ENCODE measurements at regions of chr15 and their contacts with region 1.

Region 1: DNA sequence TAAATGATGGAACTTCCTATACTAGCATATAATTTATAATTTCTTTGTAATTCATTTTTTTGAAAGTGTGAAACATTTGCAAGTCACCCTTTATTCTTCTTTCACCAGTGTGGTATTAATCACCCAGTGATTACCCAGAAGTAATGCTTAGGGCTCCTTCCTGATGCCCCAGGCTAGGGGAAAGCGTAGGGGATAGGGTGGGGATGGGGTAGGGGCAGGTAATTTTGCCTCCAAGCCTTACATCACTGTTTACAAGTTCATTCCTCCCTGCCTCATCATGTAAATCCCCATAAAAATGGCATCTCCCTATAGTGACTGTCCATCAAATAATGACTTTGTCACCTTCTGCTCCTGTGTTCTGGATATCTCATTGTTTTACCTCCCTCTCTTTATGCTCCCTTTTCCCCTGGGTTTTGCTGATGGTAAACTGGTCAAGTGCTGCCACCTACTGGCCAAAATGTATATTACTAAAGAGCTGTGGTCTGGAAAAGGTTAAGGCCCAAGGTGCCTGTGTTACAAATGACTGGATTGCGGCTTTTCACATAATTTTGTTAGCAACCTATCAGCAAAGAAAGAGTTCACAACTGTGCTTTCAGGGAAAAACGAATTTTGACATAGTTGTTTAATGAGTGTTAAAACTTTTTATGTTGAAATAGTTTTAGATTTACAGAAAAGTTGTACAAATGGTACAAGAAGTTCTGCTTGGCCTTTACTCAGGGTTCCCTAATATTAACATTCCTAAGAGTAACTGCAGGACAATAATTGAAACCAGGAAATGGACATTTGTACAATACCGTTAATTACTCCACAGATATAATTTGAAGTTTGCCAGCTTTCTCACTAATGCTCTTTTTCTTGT is 54.7 kb downstream of the ONECUT1 start:
- DNase-seq: peak; percentile 77
- H3K4me3 Mint-ChIP-seq: no peak overlapping the region
- H3K27ac Mint-ChIP-seq: no peak overlapping the region
- H3K4me1 Mint-ChIP-seq: peaks cover 35% of the 10 kb centered on the region
- H3K27me3 Mint-ChIP-seq: peaks cover 11% of the 10 kb centered on the region

Region 2: GRCh38 chr15:52261498-52262242 is 473.8 kb before region 1 on chr15:
- CTCF ChIA-PET with region 1: interaction called, 80 read pairs
- DNase-seq: peak; percentile 80
- H3K4me3 Mint-ChIP-seq: peak overlapping the region; percentile 36
- H3K27ac Mint-ChIP-seq: peak overlapping the region; percentile 94
- H3K4me1 Mint-ChIP-seq: peaks cover 68% of the 10 kb centered on the region
- H3K27me3 Mint-ChIP-seq: no peaks in the 10 kb centered on the region

Region 3: DNA sequence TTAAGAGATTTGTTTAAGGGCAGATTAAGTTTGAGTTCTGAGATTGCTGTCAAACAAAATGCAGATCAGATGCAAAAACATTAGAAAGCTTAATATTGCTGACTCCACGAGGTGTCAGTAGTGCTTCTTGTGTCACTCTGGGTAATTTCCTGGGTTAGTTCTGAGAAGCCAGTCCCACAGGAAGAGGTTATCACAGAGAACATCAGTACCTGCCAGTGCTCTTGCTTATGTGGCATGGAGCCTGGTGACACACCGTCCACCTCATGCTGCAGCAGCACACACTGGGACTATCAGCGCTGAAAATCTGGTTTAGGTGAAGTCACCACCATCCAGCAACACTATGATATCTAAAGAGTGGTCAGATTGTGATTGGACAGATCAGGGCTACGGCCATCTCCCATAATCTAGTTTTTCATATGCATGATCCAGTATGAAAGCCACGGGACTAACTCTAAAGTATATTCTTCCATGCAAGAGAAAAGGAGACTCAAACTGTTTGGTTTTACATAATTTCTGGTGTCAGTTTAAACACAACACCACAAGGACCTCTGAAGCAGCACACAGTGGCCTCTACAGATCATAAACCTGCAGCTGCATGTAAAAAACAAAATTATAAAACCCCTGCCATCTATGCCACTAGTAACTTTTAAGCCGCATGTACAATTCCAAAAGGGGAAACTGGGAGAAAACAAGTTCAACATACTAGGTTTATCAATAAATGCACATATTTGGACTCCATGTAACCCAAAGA is 403.8 kb before region 1 on chr15:
- CTCF ChIA-PET with region 1: interaction called, 40 read pairs
- DNase-seq: peak; percentile 70
- H3K4me3 Mint-ChIP-seq: peak overlapping the region; percentile 16
- H3K27ac Mint-ChIP-seq: peak overlapping the region; percentile 76
- H3K4me1 Mint-ChIP-seq: peaks cover 38% of the 10 kb centered on the region
- H3K27me3 Mint-ChIP-seq: no peaks in the 10 kb centered on the region

Region 4: GRCh38 chr15:52448011-52448890 is 287.2 kb before region 1 on chr15:
- CTCF ChIA-PET with region 1: no interaction called
- DNase-seq: no peak
- H3K4me3 Mint-ChIP-seq: no peak overlapping the region
- H3K27ac Mint-ChIP-seq: no peak overlapping the region
- H3K4me1 Mint-ChIP-seq: no peaks in the 10 kb centered on the region
- H3K27me3 Mint-ChIP-seq: no peaks in the 10 kb centered on the region

Region 5: DNA sequence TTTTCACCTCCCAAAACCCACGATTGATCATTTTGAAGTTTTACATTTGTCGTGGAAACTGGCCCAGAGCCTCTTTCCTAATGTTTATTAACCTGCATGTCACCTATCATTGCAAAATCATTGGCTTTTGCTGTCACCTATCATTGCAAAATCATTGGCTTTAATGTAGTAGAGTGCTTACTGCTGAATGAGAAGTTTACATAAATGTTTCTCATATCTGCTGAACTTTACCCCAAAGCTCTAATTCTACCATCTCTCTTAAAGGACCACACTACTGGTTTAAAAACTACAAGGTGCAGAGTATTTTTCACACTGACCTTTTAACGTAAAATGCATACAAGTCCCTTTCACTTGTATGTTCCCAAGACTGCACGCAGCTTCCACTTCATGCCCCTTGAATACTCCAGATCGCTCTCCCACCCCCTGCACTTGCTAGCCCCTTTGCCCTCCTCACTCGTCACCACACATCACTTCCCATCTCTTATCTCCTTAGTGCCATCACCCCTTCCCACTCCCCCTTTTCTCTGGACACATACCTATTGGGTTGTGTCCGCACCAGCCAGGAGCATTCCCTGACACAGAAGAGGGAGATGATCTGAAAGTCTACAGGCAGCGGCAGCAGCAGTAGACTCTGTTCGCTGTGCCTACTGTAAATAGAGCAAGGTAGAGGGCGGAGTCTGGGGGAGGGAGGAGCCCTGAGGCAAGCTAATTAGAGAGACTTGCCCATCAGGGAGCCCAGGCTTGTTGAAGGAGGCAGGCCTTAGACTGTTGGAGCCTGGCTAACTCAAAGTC is 26.1 kb before region 1 on chr15:
- CTCF ChIA-PET with region 1: no interaction called
- DNase-seq: no peak
- H3K4me3 Mint-ChIP-seq: no peak overlapping the region
- H3K27ac Mint-ChIP-seq: no peak overlapping the region
- H3K4me1 Mint-ChIP-seq: no peaks in the 10 kb centered on the region
- H3K27me3 Mint-ChIP-seq: peaks cover 3% of the 10 kb centered on the region

Region 6: DNA sequence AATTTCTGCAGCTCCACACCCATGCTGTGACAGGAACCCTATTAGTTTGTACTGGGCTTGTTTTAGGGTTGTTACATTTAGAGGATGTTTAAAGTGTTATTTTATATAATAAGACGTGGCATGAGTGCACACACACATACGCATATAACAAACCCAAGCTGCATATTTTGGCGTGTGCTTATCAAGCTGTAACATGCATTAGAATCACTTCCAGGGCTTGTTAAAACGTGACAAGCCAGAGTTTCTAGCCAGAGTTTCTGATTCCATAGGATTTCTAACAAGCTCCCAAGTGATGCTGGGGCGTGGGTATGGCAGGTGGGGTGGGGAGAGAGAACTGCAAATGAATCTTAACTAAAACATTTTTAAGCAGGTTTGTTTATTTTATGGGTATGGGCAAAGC is 37.3 kb after region 1 on chr15:
- CTCF ChIA-PET with region 1: no interaction called
- DNase-seq: no peak
- H3K4me3 Mint-ChIP-seq: no peak overlapping the region
- H3K27ac Mint-ChIP-seq: no peak overlapping the region
- H3K4me1 Mint-ChIP-seq: no peaks in the 10 kb centered on the region
- H3K27me3 Mint-ChIP-seq: peaks cover 62% of the 10 kb centered on the region

Region 7: GRCh38 chr15:52844823-52845222 is 109.4 kb after region 1 on chr15:
- CTCF ChIA-PET with region 1: no interaction called
- DNase-seq: no peak
- H3K4me3 Mint-ChIP-seq: no peak overlapping the region
- H3K27ac Mint-ChIP-seq: no peak overlapping the region
- H3K4me1 Mint-ChIP-seq: no peaks in the 10 kb centered on the region
- H3K27me3 Mint-ChIP-seq: peaks cover 25% of the 10 kb centered on the region

Measured in activated naive CD4-positive, alpha-beta T cell treated with anti-CD3 and anti-CD28 coated beads, Interleukin-2, amount 10 ng/mL, durations not matched to agents 7 days and 5 days (primary cell).